Activated CD4-positive, alpha-beta memory T cell treated with anti-CD3 and anti-CD28 coated beads, Interleukin-2, amount 10 ng/mL, durations not matched to agents 7 days and 5 days (primary cell): ENCODE measurements at regions of chr7 and their contacts with region 1.

Region 1: DNA sequence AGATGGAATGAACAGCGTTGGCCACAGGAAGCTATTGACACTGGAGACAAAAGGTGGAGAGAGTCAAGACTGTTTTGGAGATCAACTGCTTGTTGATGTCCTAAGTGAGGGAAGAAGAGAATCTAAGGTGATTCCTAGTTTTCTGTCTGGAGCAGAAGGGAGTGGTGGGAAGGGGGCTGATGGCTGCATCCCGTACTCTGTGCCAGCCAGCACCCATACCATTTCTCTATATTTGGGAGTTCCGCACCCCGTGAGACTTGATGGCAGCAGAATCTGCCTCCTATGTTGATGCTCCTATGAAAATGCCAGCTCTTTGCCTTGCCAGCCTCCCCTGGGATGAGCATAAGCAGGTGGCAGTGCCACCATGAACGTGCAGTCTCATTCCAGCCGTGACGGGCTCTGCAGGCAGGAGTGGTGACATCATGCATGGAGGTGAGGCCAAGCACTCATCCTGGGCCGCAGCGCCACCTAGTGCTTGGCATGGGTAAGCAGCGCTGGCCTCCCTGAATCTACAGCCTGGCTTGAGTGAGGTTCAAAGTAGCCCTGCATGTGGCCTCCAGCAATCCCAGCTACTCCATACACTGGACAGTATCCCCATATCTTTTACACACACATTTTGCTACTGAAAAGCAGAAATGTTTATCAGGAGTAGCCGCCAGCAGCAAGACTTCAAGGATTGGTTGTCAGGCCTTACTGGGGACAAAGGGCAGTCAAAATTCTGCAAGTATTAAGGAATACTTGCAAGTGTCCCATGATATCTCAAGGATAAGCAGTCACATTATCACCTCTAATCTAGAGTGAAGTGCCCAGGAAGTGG is 43.0 kb downstream of the PODXL start:
- DNase-seq: peak; percentile 85
- H3K4me3 Mint-ChIP-seq: no peak overlapping the region
- H3K27ac Mint-ChIP-seq: no peak overlapping the region
- H3K4me1 Mint-ChIP-seq: peaks cover 20% of the 10 kb centered on the region
- H3K27me3 Mint-ChIP-seq: no peaks in the 10 kb centered on the region

Region 2: GRCh38 chr7:131501422-131501821 is 12.0 kb before region 1 on chr7:
- CTCF ChIA-PET with region 1: interaction called, 22 read pairs
- POLR2A ChIA-PET with region 1: no interaction called
- DNase-seq: peak; percentile 77
- H3K4me3 Mint-ChIP-seq: no peak overlapping the region
- H3K27ac Mint-ChIP-seq: peak overlapping the region; percentile 44
- H3K4me1 Mint-ChIP-seq: peaks cover 25% of the 10 kb centered on the region
- H3K27me3 Mint-ChIP-seq: no peaks in the 10 kb centered on the region